OCI-LY7 (cell line): ENCODE measurements at regions of chrX and their contacts with region 1.

Region 1: GRCh38 chrX:154411322-154411980 is at the start of gene TAFAZZIN:
- DNase-seq: peak; percentile 80
- H3K4me3 ChIP-seq: peak within 1 kb of the TSS; percentile 91
- H3K27ac ChIP-seq: peak within 1 kb of the TSS; percentile 80
- H3K4me1 ChIP-seq: peaks cover 24% of the 10 kb centered on the region
- CTCF ChIP-seq: no peak
- total RNA-seq, gene TAFAZZIN: 74.2 and 94.5 TPM in 2 replicates

Region 2: DNA sequence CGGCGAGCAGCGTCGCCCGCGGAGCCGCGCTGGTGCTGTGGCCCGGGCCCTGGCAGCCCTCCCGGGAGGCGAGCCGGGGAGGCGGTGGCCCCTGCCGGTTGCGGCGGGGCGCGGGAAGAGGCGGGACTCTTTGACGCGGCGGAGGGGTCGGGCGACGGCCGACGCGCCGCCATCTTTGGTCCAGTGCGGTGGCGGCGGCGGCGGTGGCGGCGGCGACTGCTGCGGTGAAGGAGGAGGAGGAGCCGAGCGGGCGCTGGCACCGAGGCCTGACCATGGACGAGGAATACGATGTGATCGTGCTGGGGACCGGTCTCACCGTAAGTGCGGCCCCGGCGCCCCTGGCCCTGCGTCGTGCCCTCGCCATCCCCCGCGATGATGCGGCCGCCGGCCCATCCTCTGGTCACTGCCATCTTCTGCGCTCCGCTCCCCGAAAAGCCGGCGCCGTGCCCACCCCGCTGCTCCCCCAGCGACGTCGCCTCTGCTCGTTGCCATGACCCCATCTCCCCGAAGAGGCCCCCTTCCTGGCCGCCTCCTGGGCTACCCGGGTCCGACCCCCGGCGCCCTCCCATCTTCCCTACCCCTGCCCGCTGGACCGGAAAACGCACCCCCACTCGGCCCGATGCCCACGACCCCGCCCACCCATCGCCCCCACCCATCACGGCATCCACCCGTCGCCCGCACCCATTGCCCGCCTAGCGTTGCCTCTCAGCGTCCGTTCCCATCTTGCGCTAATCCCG is 25.7 kb after region 1 on chrX and contains the start of gene GDI1:
- CTCF ChIA-PET with region 1: no interaction called
- POLR2A ChIA-PET with region 1: no interaction called
- intact Hi-C with region 1: loop called (anchors 1 kb)
- DNase-seq: peak; percentile 56
- H3K4me3 ChIP-seq: peak within 1 kb of the TSS; percentile 83
- H3K27ac ChIP-seq: no peak within 1 kb of the TSS
- H3K4me1 ChIP-seq: peaks cover 15% of the 10 kb centered on the region
- CTCF ChIP-seq: no peak
- total RNA-seq, gene GDI1: 101 and 103 TPM in 2 replicates

Region 3: GRCh38 chrX:154484255-154485154 is 73.1 kb after region 1 on chrX:
- CTCF ChIA-PET with region 1: no interaction called
- POLR2A ChIA-PET with region 1: no interaction called
- intact Hi-C with region 1: loop called (anchors 5 kb)
- DNase-seq: no peak
- H3K4me3 ChIP-seq: peak overlapping the region; percentile 98
- H3K27ac ChIP-seq: no peak overlapping the region
- H3K4me1 ChIP-seq: peaks cover 68% of the 10 kb centered on the region
- CTCF ChIP-seq: no peak